Left lung (tissue), 14 donors: ENCODE measurements at regions of chr19 and their contacts with region 1.

Region 1: DNA sequence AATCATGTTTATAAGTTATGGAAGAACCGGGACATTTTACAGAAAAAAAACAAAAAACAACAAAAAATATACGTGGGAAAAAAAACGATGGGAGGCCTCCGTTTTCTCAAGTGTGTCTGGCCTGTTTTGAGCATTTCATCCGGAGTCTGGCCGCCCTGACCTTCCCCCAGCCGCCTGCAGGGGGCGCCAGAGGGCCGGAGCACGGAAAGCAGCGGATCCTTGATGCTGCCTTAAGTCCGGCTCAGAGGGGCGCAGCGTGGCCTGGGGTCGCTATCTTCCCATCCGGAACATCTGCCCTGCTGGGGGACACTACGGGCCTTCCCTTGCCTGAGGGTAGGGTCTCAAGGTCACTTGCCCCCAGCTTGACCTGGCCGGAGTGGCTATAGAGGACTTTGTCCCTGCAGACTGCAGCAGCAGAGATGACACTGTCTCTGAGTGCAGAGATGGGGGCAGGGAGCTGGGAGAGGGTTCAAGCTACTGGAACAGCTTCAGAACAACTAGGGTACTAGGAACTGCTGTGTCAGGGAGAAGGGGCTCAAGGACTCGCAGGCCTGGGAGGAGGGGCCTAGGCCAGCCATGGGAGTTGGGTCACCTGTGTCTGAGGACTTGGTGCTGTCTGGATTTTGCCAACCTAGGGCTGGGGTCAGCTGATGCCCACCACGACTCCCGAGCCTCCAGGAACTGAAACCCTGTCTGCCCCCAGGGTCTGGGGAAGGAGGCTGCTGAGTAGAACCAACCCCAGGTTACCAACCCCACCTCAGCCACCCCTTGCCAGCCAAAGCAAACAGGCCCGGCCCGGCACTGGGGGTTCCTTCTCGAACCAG is 1.8 kb upstream of the APOE start:
- DNase-seq: peak; percentile 68 to 95 (median 74)
- ATAC-seq: peak; percentile 81
- H3K4me3 ChIP-seq: no peak overlapping the region
- H3K27ac ChIP-seq: no peak overlapping the region
- H3K4me1 ChIP-seq: peaks cover 0 to 20% of the 10 kb centered on the region in 2 donors
- H3K27me3 ChIP-seq: peaks cover 4 to 28% of the 10 kb centered on the region in 2 donors
- CTCF ChIP-seq: peak; percentile 98 to 100

Region 2: DNA sequence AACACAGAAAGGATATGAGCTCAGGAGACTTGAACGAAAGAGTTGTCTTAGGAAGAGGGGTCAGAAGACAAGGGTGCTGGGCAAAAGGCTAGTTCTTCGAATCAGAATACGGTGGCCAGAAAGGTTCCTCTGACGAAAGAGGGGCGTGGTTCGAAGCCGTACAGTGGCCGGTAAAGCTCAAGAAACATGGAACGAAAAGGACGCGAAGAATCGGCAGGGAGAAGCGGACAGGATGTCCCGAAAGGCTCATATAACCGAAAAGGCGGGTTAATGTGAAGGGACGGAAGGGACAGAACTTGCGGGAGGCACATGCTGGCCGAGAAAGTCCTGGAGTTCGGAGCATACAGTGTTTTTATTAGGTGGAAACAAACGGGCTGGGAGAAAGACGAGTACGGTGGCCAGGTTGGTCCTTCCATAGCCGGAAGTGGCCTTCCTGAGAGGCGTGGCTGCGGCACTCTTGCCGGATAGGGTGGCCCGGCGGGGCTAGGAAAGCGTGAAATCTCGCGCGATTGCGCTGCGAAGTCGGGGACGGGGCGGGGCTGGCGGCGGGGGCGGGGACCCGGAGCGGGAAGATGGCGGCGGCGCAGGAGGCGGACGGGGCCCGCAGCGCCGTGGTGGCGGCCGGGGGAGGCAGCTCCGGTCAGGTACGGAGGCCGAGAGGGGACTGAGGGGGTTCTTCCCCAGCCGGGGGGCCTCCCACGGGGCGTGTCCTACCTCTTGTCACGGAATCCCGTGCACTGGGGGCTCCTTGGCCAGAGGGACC is 51.2 kb after region 1 on chr19 and contains the start of gene CLPTM1:
- intact Hi-C with region 1: loop called in 1 of 2 experiments (anchors 5 kb)
- DNase-seq: peak; percentile 97 to 99 (median 98)
- ATAC-seq: peak; percentile 95
- H3K4me3 ChIP-seq: peak within 1 kb of the TSS; percentile 91 to 97
- H3K27ac ChIP-seq: peak within 1 kb of the TSS; percentile 87 to 94
- H3K4me1 ChIP-seq: peaks cover 7 to 49% of the 10 kb centered on the region in 2 donors
- H3K27me3 ChIP-seq: no peaks in the 10 kb centered on the region
- CTCF ChIP-seq: no peak
- polyA plus RNA-seq, gene CLPTM1: 67.1 to 84.0 (median 69.7) TPM

Region 3: DNA sequence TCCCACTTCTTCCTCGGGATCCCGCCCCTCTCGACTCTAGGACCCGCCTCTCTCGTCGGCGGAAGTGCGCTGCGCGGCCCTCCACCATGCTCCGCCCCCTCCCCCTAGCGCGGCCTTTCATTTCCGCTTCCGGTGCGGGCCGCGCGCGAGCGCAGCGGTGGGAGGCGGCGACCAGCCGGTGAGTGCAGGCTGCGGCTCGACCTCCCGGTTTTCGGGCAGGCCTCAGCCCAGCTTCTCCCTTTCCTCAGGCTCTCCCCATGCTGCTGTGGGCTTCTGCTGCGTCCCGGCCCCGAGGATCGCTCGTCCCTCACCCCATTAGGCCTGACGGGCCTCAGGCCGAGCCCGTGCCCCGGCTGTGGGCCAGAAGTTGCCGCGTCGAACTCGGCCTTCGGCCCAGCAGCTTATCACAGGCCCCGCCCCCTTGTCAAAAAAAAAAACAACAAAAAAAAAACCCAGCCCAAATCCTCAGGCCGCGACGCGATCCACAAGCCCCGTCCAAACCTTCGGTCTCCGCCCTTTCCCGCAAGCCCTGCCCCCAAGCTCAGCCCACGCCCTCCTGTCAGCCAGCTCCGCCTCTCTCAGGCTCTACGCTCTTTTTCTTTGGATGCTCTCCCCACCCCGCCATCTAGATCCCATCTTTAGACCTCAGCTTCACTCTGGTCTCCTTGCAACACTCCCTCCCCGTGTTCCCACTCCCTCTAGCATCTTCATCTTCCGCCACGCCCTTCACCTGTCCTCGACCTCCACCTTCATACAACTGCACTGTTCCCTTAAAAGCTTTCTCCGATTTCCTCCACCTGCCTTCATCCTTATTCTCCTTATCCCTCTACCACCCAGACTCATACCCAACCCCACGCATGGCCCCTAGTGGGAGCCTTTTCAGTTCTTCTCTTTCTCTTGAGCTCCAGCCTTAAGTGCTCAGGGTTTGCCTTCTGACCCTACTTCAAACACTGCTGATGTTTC is 135.4 kb after region 1 on chr19 and contains the start of gene CLASRP:
- intact Hi-C with region 1: no loop called
- DNase-seq: peak; percentile 89 to 97 (median 94)
- ATAC-seq: peak; percentile 99
- H3K4me3 ChIP-seq: peak within 1 kb of the TSS; percentile 97
- H3K27ac ChIP-seq: peak within 1 kb of the TSS; percentile 96 to 97
- H3K4me1 ChIP-seq: peaks cover 14 to 45% of the 10 kb centered on the region in 2 donors
- H3K27me3 ChIP-seq: no peaks in the 10 kb centered on the region
- CTCF ChIP-seq: no peak
- polyA plus RNA-seq, gene CLASRP: 74.7 to 95.3 (median 85.9) TPM